Activated CD8-positive, alpha-beta memory T cell treated with anti-CD3 and anti-CD28 coated beads, Interleukin-2, amount 10 ng/mL, durations not matched to agents 7 days and 5 days (primary cell): ENCODE measurements at regions of chr15 and their contacts with region 1.

Region 1: DNA sequence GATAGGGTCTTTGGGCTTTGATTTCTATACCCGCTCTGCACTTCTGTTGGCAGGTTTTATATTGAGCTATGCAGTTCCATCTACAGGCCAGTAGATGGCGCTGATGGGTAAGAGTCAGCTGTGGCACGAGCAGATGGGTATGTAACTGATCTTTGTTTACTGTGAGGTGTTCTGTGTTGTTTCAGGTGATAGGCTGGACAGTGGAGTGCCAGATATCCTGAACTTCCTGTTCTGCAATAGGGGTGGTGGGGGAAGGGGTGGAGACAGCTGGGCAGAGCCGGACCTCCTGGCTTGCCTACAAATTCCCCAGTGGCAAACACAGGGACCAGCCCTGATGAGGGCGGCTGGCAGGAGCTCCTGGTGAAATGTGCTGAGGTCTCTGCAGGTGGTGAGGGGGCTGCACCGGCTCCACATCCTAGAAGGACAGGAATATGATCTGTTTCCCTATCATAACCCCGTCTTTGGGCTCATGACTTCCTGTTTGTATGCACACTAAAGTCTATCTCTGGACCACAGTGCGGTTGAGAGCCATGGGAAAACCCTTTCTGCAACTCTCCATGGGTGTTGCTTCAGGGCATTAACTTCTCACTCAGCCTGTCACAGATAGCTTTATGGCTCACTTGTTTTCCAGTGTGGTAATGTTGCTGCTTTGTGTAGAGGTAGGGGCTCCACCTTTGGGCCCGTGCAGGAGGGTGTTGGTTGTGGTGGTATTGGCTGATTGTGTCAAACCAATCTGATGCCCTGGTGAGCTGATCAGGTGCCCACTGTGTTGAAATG is 13.4 kb upstream of the FAM98B start:
- DNase-seq: peak; percentile 63
- ATAC-seq: peak; percentile 90
- H3K4me3 Mint-ChIP-seq: no peak overlapping the region
- H3K27ac Mint-ChIP-seq: peak overlapping the region; percentile 7
- H3K4me1 Mint-ChIP-seq: peaks cover 8% of the 10 kb centered on the region
- H3K27me3 Mint-ChIP-seq: peaks cover 44% of the 10 kb centered on the region

Region 2: DNA sequence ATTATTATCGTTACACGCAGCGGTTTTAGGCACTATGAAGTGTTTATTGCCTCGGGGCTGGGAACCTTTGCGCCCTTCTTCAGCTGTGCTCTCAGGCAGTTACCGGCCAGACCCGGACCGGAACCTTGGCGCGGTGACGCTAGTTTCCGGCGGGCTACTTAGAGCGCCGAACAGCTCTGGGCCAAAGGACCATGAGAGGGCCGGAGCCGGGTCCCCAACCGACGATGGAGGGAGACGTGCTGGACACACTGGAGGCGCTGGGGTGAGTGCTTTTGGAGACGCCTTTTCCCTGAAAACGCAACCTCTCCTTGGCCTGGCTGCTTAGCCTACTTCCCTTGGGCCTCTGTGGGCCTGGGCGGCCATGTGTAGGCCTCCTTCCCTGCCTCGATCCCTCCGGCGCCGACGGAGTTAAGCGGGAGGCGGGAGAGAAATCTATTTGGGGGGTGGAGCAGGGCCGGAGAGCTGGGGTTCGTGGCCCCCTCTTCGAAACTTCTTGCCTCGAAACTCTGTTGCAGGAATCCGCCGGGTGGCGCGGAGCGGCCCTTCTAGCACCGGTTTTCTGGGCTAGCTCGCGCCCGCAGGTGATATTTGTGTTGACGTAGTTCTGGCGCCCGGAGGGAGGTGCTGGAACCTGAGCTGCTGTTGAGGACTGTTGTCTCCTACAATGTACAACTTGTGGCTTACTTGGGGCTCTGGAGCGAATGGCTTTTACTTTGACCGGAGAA is 13.6 kb after region 1 on chr15 and contains the start of gene FAM98B:
- CTCF ChIA-PET with region 1: interaction called, 49 read pairs
- DNase-seq: peak; percentile 92
- ATAC-seq: peak; percentile 96
- H3K4me3 Mint-ChIP-seq: peak within 1 kb of the TSS; percentile 94
- H3K27ac Mint-ChIP-seq: peak within 1 kb of the TSS; percentile 92
- H3K4me1 Mint-ChIP-seq: peaks cover 34% of the 10 kb centered on the region
- H3K27me3 Mint-ChIP-seq: peaks cover 15% of the 10 kb centered on the region
- total RNA-seq, gene FAM98B: 34.8 to 41.4 TPM

Region 3: DNA sequence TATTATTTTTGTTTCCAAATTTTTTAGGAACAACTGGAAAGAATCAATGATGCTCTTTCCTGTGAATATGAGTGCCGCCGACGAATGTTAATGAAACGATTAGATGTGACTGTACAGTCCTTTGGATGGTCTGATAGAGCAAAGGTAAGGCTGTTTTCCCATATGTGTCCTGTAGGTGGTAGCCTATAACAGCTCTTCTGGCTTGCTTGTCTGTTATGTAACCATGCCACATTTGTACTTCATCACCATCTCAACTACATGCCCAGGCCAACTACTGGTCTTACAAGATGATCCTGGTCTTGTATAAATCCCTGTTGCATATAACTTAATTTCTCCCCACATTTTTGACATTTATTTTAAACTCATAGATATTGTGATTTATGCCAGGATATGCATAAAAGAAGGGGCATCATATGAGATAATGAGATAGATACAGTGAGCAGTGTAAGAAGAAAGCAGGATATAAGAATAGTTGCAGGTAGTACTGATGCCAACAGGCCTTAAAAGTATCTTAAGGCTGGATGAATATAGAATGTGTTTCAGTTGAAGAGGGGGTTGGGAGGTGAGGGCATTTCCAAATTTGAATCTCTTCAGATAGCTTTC is 33.7 kb after region 1 on chr15:
- CTCF ChIA-PET with region 1: interaction called, 14 read pairs
- DNase-seq: peak; percentile 48
- ATAC-seq: peak; percentile 98
- H3K4me3 Mint-ChIP-seq: no peak overlapping the region
- H3K27ac Mint-ChIP-seq: peak overlapping the region; percentile 30
- H3K4me1 Mint-ChIP-seq: peaks cover 6% of the 10 kb centered on the region
- H3K27me3 Mint-ChIP-seq: no peaks in the 10 kb centered on the region

Region 4: GRCh38 chr15:38683382-38684242 is 243.1 kb after region 1 on chr15:
- CTCF ChIA-PET with region 1: interaction called, 56 read pairs
- DNase-seq: peak; percentile 89
- ATAC-seq: peak; percentile 73
- H3K4me3 Mint-ChIP-seq: peak overlapping the region; percentile 37
- H3K27ac Mint-ChIP-seq: peak overlapping the region; percentile 96
- H3K4me1 Mint-ChIP-seq: peaks cover 70% of the 10 kb centered on the region
- H3K27me3 Mint-ChIP-seq: no peaks in the 10 kb centered on the region